A673 (cell line): ENCODE measurements at regions of chr12 and their contacts with region 1.

Region 1: GRCh38 chr12:94636462-94637085 is 13.8 kb downstream of the TMCC3 start:
- DNase-seq: no peak
- H3K4me3 ChIP-seq: no peak overlapping the region
- H3K27ac ChIP-seq: no peak overlapping the region
- H3K4me1 ChIP-seq: no peaks in the 10 kb centered on the region
- H3K27me3 ChIP-seq: no peaks in the 10 kb centered on the region
- CTCF ChIP-seq: no peak

Region 2: GRCh38 chr12:94649349-94650142 is 13.0 kb after region 1 on chr12:
- CTCF ChIA-PET with region 1: no interaction called
- POLR2A ChIA-PET with region 1: interaction called, 14 read pairs
- intact Hi-C with region 1: no loop called
- DNase-seq: no peak
- H3K4me3 ChIP-seq: peak overlapping the region; percentile 49
- H3K27ac ChIP-seq: no peak overlapping the region
- H3K4me1 ChIP-seq: no peaks in the 10 kb centered on the region
- H3K27me3 ChIP-seq: peaks cover 41% of the 10 kb centered on the region
- CTCF ChIP-seq: peak; percentile 22; the same call in 1 of the 2 replicates

Region 3: GRCh38 chr12:94863321-94864035 is 226.9 kb after region 1 on chr12:
- CTCF ChIA-PET with region 1: no interaction called
- POLR2A ChIA-PET with region 1: no interaction called
- intact Hi-C with region 1: no loop called
- DNase-seq: no peak
- H3K4me3 ChIP-seq: no peak overlapping the region
- H3K27ac ChIP-seq: no peak overlapping the region
- H3K4me1 ChIP-seq: no peaks in the 10 kb centered on the region
- H3K27me3 ChIP-seq: peaks cover 49% of the 10 kb centered on the region
- CTCF ChIP-seq: no peak